ENCODE measurements at regions of chr11 and their contacts with region 1.

Region 1: GRCh38 chr11:7098235-7098832 is 9.5 kb downstream of the RBMXL2 start:
- DNase-seq: no peak
- H3K4me3 ChIP-seq: no peak overlapping the region
- H3K27ac ChIP-seq: no peak overlapping the region
- H3K4me1 ChIP-seq: no peaks in the 10 kb centered on the region
- H3K27me3 ChIP-seq: no peaks in the 10 kb centered on the region
- CTCF ChIP-seq: peak; percentile 36 to 44

Region 2: DNA sequence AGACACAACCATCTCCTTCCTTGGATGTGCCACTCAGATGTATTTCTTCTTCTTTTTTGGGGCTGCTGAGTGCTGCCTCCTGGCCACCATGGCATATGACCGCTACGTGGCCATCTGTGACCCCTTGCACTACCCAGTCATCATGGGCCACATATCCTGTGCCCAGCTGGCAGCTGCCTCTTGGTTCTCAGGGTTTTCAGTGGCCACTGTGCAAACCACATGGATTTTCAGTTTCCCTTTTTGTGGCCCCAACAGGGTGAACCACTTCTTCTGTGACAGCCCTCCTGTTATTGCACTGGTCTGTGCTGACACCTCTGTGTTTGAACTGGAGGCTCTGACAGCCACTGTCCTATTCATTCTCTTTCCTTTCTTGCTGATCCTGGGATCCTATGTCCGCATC is 221.4 kb before region 1 on chr11:
- intact Hi-C with region 1: no loop called
- DNase-seq: no peak
- H3K4me3 ChIP-seq: no peak overlapping the region
- H3K27ac ChIP-seq: no peak overlapping the region
- H3K4me1 ChIP-seq: no peaks in the 10 kb centered on the region
- H3K27me3 ChIP-seq: no peaks in the 10 kb centered on the region
- CTCF ChIP-seq: no peak

Region 3: DNA sequence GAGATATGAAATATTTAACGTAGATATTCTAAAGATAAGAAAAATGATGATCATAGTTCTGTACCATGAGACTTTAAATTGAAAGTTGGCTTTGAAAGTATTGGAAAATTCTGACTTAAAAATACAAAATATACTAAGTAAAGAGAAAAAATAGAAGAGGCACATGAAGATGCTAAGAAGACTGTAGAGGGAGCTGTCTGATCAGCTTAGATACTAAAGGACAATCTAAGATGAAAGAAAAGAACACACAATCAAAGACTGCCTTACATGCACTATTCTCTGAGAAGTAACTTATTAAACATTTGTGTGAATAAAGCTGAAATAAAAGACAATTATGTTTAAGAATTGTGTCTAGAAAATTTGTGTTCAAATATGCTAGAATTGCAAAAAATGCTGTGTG is 45.6 kb after region 1 on chr11:
- intact Hi-C with region 1: no loop called
- DNase-seq: no peak
- H3K4me3 ChIP-seq: no peak overlapping the region
- H3K27ac ChIP-seq: no peak overlapping the region
- H3K4me1 ChIP-seq: no peaks in the 10 kb centered on the region
- H3K27me3 ChIP-seq: no peaks in the 10 kb centered on the region
- CTCF ChIP-seq: no peak

Region 4: GRCh38 chr11:7688238-7688826 is 590.0 kb after region 1 on chr11:
- intact Hi-C with region 1: loop called (anchors 10 kb)
- DNase-seq: no peak
- H3K4me3 ChIP-seq: no peak overlapping the region
- H3K27ac ChIP-seq: no peak overlapping the region
- H3K4me1 ChIP-seq: no peaks in the 10 kb centered on the region
- H3K27me3 ChIP-seq: no peaks in the 10 kb centered on the region
- CTCF ChIP-seq: peak; percentile 68 to 82